ENCODE measurements at regions of chr17 and their contacts with region 1.

Region 1: GRCh38 chr17:72691586-72691985 is 400.9 kb downstream of the SLC39A11 start:
- DNase-seq: no peak
- H3K4me3 ChIP-seq: no peak overlapping the region
- CTCF ChIP-seq: no peak
- POLR2A ChIP-seq: no peak

Region 2: DNA sequence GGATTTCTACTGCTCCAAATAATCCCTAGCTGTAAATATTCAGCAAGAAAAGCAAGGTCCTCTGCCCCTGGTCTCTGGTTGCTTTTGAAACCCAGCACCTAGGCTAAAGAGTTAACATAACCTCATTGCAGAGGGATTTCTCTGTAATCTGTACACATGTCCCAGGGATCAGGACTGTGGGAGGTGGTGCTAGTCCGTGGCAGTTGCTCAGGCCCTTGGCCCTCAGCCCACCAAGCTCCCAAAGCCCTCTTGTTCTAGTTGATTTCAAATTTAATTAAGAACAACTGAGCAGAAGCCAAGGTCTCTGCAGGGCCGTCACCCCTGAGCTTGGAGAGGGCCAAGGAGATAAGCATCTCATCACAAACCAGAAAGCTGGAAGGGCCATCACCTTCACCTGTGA is 389.7 kb before region 1 on chr17:
- intact Hi-C with region 1: loop called (anchors 5 kb)
- DNase-seq: no peak
- H3K4me3 ChIP-seq: no peak overlapping the region
- CTCF ChIP-seq: no peak
- POLR2A ChIP-seq: no peak